Spleen (tissue), 13 donors: ENCODE measurements at regions of chr7 and their contacts with region 1.

Region 1: GRCh38 chr7:66739953-66740301 is 606 bp upstream of the RABGEF1 start:
- DNase-seq: peak; percentile 80
- H3K4me3 ChIP-seq: peak overlapping the region; percentile 79 to 96 (median 91)
- H3K27ac ChIP-seq: peak overlapping the region; percentile 94 to 99 (median 98)
- H3K4me1 ChIP-seq: peaks cover 20 to 80% (median 56%) of the 10 kb centered on the region in 6 donors
- H3K27me3 ChIP-seq: no peaks in the 10 kb centered on the region
- CTCF ChIP-seq: no peak
- POLR2A ChIP-seq: no peak

Region 2: DNA sequence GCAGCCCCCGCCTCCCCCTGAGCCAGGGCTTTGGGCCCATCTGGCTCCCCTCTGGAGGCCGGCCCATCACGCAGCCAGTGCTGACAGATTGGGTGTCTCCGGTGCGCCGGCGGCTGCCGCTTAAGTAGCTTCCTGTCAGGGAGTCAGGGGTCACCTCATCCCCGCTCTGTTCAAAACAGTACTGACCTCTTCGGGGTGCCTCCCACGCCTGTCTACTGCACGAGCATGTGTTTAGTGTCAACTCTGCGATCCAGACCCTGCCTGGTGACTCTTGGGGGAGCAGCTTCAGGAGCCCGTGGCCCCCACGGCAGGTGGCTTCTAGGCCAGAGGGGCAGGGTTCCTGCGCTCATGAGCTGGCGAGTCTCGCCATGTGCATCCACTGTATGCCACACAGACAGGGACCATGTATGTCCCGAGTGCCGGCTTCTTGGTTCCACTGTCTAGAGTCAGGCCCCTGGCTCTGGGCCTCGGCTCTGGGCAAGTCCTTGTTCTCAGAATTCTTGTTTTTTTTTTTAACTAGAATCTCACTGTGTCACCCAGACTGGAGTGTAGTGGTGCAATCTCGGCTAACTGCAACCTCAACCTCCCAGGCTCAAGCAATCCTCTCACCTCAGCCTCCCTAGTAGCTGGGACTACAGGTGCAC is 75.2 kb before region 1 on chr7:
- intact Hi-C with region 1: no loop called
- DNase-seq: peak; percentile 71
- H3K4me3 ChIP-seq: no peak overlapping the region
- H3K27ac ChIP-seq: peak overlapping the region in 1 of 8 donors; percentile 21
- H3K4me1 ChIP-seq: peaks cover 0 to 4% (median 0%) of the 10 kb centered on the region in 6 donors
- H3K27me3 ChIP-seq: no peaks in the 10 kb centered on the region
- CTCF ChIP-seq: no peak
- POLR2A ChIP-seq: no peak

Region 3: GRCh38 chr7:66681491-66682349 is 58.2 kb before region 1 on chr7:
- intact Hi-C with region 1: loop called (anchors 10 kb)
- DNase-seq: peak; percentile 99
- H3K4me3 ChIP-seq: peak overlapping the region; percentile 78 to 97 (median 87)
- H3K27ac ChIP-seq: peak overlapping the region; percentile 86 to 100 (median 99)
- H3K4me1 ChIP-seq: peaks cover 7 to 54% (median 36%) of the 10 kb centered on the region in 6 donors
- H3K27me3 ChIP-seq: no peaks in the 10 kb centered on the region
- CTCF ChIP-seq: no peak
- POLR2A ChIP-seq: peak; percentile 70 to 93 (median 90)